ENCODE measurements at regions of chr1 and their contacts with region 1.

Region 1: GRCh38 chr1:230855886-230856285 is 12.4 kb downstream of the C1orf198 start:
- DNase-seq: no peak
- ATAC-seq: no peak
- H3K4me3 ChIP-seq: no peak overlapping the region
- H3K27ac ChIP-seq: peak overlapping the region in 1 of 2 experiments; percentile 4; a peak in 1 of 6 replicates
- H3K4me1 ChIP-seq: peaks cover 16% of the 10 kb centered on the region; the same call in 2 of the 3 replicates
- CTCF ChIP-seq: no peak
- EP300 ChIP-seq: no peak
- POLR2A ChIP-seq: no peak
- RAD21 ChIP-seq: no peak

Region 2: GRCh38 chr1:230867903-230868735 is 12.2 kb after region 1 on chr1 and contains the start of gene C1orf198:
- CTCF ChIA-PET with region 1: interaction called, 11 read pairs
- POLR2A ChIA-PET with region 1: interaction called, 5 read pairs
- DNase-seq: peak; percentile 56 to 71
- ATAC-seq: peak; percentile 81 to 93
- H3K4me3 ChIP-seq: peak within 1 kb of the TSS; percentile 94
- H3K27ac ChIP-seq: peak within 1 kb of the TSS; percentile 86 to 93
- H3K4me1 ChIP-seq: peaks cover 26% of the 10 kb centered on the region
- CTCF ChIP-seq: no peak
- EP300 ChIP-seq: no peak
- POLR2A ChIP-seq: peak; percentile 93
- RAD21 ChIP-seq: no peak
- polyA plus RNA-seq, gene C1orf198: 15.8 and 20.4 TPM in 2 replicates